Upper lobe of right lung (tissue), 1 donor: ENCODE measurements at regions of chr11 and their contacts with region 1.

Region 1: GRCh38 chr11:10413268-10413667 is 41.8 kb upstream of the AMPD3 start:
- DNase-seq: no peak
- ATAC-seq: peak; percentile 54
- H3K4me3 ChIP-seq: no peak overlapping the region
- H3K27ac ChIP-seq: no peak overlapping the region
- H3K4me1 ChIP-seq: peaks cover 17% of the 10 kb centered on the region
- H3K27me3 ChIP-seq: no peaks in the 10 kb centered on the region
- CTCF ChIP-seq: peak; percentile 19

Region 2: GRCh38 chr11:10450464-10451425 is 37.5 kb after region 1 on chr11:
- intact Hi-C with region 1: no loop called
- DNase-seq: peak; percentile 85
- ATAC-seq: peak; percentile 86
- H3K4me3 ChIP-seq: peak overlapping the region; percentile 60
- H3K27ac ChIP-seq: peak overlapping the region; percentile 86
- H3K4me1 ChIP-seq: peaks cover 4% of the 10 kb centered on the region
- H3K27me3 ChIP-seq: no peaks in the 10 kb centered on the region
- CTCF ChIP-seq: peak; percentile 54

Region 3: GRCh38 chr11:10735481-10736475 is 322.5 kb after region 1 on chr11:
- intact Hi-C with region 1: loop called (anchors 5 kb)
- DNase-seq: peak; percentile 97
- ATAC-seq: peak; percentile 100
- H3K4me3 ChIP-seq: peak overlapping the region; percentile 8
- H3K27ac ChIP-seq: peak overlapping the region; percentile 58
- H3K4me1 ChIP-seq: peaks cover 20% of the 10 kb centered on the region
- H3K27me3 ChIP-seq: no peaks in the 10 kb centered on the region
- CTCF ChIP-seq: peak; percentile 99